Activated T-helper 2 cell treated with anti-CD3 and anti-CD28 coated beads, Interferon-gamma antibody, Interleukin-2, Interleukin-4, amounts not matched to agents 10 μg/mL and 5 μg/mL and 100 μg/mL, durations not matched to agents 14 hours and 24 hours and 36 hours (primary cell): ENCODE measurements at regions of chr22 and their contacts with region 1.

Region 1: DNA sequence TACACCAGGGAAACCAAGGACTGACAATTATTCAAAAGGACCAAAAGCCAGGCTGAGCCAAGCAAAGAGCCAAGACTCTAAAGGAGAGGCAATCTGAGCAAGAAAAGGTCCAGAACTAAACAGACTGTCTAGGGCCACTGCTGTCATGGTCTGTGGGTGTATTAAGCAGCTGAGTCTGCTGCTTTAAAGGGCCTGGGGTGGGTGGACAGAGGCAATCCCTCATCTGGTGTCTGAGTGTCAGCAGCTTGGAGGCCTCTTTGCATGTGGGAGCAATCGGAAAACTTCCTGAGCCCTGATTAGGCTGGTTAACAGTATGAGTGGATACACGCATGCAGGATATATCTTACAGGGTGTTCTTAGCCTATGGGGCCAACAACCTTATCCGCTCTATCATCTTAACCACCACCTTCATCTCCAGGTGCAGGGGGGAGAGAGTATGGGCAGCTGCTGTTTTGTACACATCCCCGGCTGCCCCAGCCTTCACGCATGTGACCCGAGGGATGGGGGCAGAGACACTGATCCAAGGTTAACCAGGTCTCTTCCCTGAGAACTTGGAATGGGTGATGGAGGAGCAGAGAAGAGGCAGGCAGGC is 67.5 kb upstream of the TIMP3 start:
- DNase-seq: no peak
- H3K4me3 Mint-ChIP-seq: no peak overlapping the region
- H3K27ac Mint-ChIP-seq: no peak overlapping the region
- H3K4me1 Mint-ChIP-seq: no peaks in the 10 kb centered on the region
- H3K27me3 Mint-ChIP-seq: peaks cover 12% of the 10 kb centered on the region

Region 2: DNA sequence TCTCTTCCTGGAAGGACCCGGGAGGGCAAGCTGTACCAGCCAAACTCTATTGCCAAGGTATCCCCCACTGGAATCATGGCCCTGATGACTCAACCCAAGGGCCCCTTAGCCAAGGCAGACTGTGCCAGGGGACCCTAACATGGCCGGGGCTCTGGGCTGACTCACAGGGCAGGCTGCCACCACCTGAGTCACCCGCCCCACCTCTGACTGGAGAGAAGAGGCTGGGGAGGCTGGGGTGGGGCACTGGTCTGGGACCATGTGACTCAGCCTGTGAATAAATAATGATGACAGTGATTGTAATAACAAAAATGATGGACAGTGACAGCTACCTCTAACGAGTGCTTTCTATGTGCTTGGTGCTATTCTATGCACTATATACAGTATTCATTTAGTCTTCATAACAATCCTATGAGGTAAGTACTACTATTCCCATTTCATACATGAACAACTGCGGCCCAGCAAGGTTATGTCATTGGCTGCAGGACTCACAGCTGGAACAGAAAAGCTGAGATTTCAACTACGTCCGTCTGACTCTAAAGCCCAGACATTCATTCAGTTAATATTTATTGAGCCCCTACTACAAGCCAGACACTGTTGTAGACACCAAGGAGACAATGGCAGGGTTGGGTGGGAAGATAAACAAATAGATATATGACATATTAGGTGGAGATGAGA is 175.2 kb before region 1 on chr22:
- intact Hi-C with region 1: no loop called
- DNase-seq: no peak
- H3K4me3 Mint-ChIP-seq: no peak overlapping the region
- H3K27ac Mint-ChIP-seq: no peak overlapping the region
- H3K4me1 Mint-ChIP-seq: no peaks in the 10 kb centered on the region
- H3K27me3 Mint-ChIP-seq: no peaks in the 10 kb centered on the region

Region 3: DNA sequence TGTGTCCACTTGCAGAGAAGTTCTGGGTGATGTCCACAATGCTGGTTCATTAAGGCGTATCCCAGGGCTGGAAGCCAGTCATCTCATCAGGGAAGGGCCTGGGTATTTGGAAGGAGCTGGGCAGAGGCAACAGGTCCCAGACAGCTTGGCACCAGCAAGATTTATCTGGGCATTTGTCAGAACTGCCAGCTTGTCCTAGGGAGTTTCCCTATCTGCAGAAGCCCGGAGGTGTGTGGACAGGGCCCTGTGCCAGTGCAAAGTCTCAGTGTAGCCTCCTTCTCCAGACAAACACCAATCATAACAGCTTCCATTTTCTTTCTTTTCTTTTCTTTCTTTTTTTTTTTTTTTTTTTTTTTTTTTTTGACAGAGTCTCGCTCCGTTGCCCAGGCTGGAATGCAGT is 57.8 kb before region 1 on chr22:
- intact Hi-C with region 1: no loop called
- DNase-seq: no peak
- H3K4me3 Mint-ChIP-seq: no peak overlapping the region
- H3K27ac Mint-ChIP-seq: no peak overlapping the region
- H3K4me1 Mint-ChIP-seq: peaks cover 1% of the 10 kb centered on the region
- H3K27me3 Mint-ChIP-seq: peaks cover 1% of the 10 kb centered on the region

Region 4: GRCh38 chr22:32691101-32691500 is 42.9 kb before region 1 on chr22:
- intact Hi-C with region 1: loop called (anchors 2 kb)
- DNase-seq: no peak
- H3K4me3 Mint-ChIP-seq: no peak overlapping the region
- H3K27ac Mint-ChIP-seq: no peak overlapping the region
- H3K4me1 Mint-ChIP-seq: no peaks in the 10 kb centered on the region
- H3K27me3 Mint-ChIP-seq: peaks cover 4% of the 10 kb centered on the region